ENCODE measurements at regions of chr16 and their contacts with region 1.

Region 1: GRCh38 chr16:49407873-49408550 is 34.4 kb downstream of the C16orf78 start:
- DNase-seq: peak; percentile 24 to 76 (median 64)
- ATAC-seq: peak; percentile 42
- H3K4me3 ChIP-seq: no peak overlapping the region
- H3K4me3 Mint-ChIP-seq: no peak overlapping the region
- H3K27ac ChIP-seq: no peak overlapping the region
- H3K27ac Mint-ChIP-seq: no peak overlapping the region
- H3K4me1 ChIP-seq: no peaks in the 10 kb centered on the region
- H3K4me1 Mint-ChIP-seq: peaks cover 3% of the 10 kb centered on the region
- H3K27me3 ChIP-seq: no peaks in the 10 kb centered on the region
- H3K27me3 Mint-ChIP-seq: peaks cover 17% of the 10 kb centered on the region
- CTCF ChIP-seq: peak; percentile 74

Region 2: DNA sequence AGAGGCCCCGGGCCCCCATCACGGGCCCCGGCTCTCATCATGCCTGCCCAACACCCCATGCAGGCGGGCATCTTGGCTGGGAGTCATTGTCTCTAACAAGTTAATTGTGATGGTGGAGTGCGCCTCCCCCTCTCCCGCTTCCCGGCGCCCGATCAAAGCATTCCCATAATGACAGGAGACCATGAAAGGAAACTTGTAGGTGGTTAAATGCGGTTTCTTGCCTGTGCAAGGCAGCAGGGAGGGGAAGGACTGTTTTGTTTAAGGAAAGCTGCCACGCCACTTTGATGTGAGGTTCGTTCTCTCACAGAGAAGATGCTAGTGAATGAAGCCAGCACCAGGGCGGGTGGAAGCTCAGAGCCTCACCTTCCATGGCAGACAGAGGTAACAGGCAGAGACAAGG is 11.0 kb after region 1 on chr16:
- CTCF ChIA-PET with region 1: interaction called, 12 read pairs
- POLR2A ChIA-PET with region 1: no interaction called
- intact Hi-C with region 1: no loop called
- DNase-seq: no peak
- ATAC-seq: no peak
- H3K4me3 ChIP-seq: no peak overlapping the region
- H3K4me3 Mint-ChIP-seq: no peak overlapping the region
- H3K27ac ChIP-seq: no peak overlapping the region
- H3K27ac Mint-ChIP-seq: no peak overlapping the region
- H3K4me1 ChIP-seq: no peaks in the 10 kb centered on the region
- H3K4me1 Mint-ChIP-seq: peaks cover 3% of the 10 kb centered on the region
- H3K27me3 ChIP-seq: no peaks in the 10 kb centered on the region
- H3K27me3 Mint-ChIP-seq: peaks cover 4% of the 10 kb centered on the region
- CTCF ChIP-seq: no peak

Region 3: DNA sequence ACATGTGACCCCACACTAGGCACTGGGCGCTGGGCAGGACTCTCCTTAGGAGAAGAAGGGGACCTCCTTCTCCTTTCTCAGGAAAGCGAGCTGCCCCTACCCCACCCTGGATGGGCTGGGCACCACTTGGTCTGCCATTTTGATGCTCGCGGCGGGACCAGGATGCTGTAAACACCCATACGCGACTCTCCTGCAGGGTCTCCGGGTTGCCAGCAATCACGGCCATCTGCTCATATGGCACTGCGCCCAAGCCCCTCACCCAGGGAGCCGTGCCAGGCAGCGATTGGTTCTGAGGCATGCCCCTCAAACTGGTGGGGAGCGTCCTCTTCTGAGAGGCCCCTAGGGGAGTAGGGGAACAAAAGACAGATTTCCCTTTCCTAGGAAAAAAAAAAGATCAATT is 64.6 kb after region 1 on chr16:
- CTCF ChIA-PET with region 1: no interaction called
- POLR2A ChIA-PET with region 1: no interaction called
- intact Hi-C with region 1: no loop called
- DNase-seq: peak in 1 of 9 experiments; percentile 41
- ATAC-seq: no peak
- H3K4me3 ChIP-seq: no peak overlapping the region
- H3K4me3 Mint-ChIP-seq: no peak overlapping the region
- H3K27ac ChIP-seq: no peak overlapping the region
- H3K27ac Mint-ChIP-seq: no peak overlapping the region
- H3K4me1 ChIP-seq: no peaks in the 10 kb centered on the region
- H3K4me1 Mint-ChIP-seq: no peaks in the 10 kb centered on the region
- H3K27me3 ChIP-seq: no peaks in the 10 kb centered on the region
- H3K27me3 Mint-ChIP-seq: no peaks in the 10 kb centered on the region
- CTCF ChIP-seq: no peak

Region 4: GRCh38 chr16:49491771-49492761 is 84.1 kb after region 1 on chr16:
- CTCF ChIA-PET with region 1: interaction called, 3 read pairs
- POLR2A ChIA-PET with region 1: no interaction called
- intact Hi-C with region 1: loop called in 1 of 2 experiments (anchors 2 kb)
- DNase-seq: peak in 7 of 9 experiments; percentile 21 to 64 (median 54)
- ATAC-seq: peak; percentile 78
- H3K4me3 ChIP-seq: no peak overlapping the region
- H3K4me3 Mint-ChIP-seq: no peak overlapping the region
- H3K27ac ChIP-seq: no peak overlapping the region
- H3K27ac Mint-ChIP-seq: no peak overlapping the region
- H3K4me1 ChIP-seq: no peaks in the 10 kb centered on the region
- H3K4me1 Mint-ChIP-seq: peaks cover 2% of the 10 kb centered on the region
- H3K27me3 ChIP-seq: no peaks in the 10 kb centered on the region
- H3K27me3 Mint-ChIP-seq: no peaks in the 10 kb centered on the region
- CTCF ChIP-seq: peak; percentile 83

Region 5: GRCh38 chr16:49592546-49593423 is 184.8 kb after region 1 on chr16:
- CTCF ChIA-PET with region 1: interaction called, 58 read pairs
- POLR2A ChIA-PET with region 1: no interaction called
- intact Hi-C with region 1: loop called in 1 of 2 experiments (anchors 1 kb)
- DNase-seq: peak; percentile 5 to 69 (median 42)
- ATAC-seq: peak; percentile 59
- H3K4me3 ChIP-seq: no peak overlapping the region
- H3K4me3 Mint-ChIP-seq: no peak overlapping the region
- H3K27ac ChIP-seq: no peak overlapping the region
- H3K27ac Mint-ChIP-seq: no peak overlapping the region
- H3K4me1 ChIP-seq: no peaks in the 10 kb centered on the region
- H3K4me1 Mint-ChIP-seq: peaks cover 12% of the 10 kb centered on the region
- H3K27me3 ChIP-seq: no peaks in the 10 kb centered on the region
- H3K27me3 Mint-ChIP-seq: peaks cover 7% of the 10 kb centered on the region
- CTCF ChIP-seq: peak; percentile 67

Region 6: GRCh38 chr16:49921791-49922456 is 513.9 kb after region 1 on chr16:
- CTCF ChIA-PET with region 1: interaction called, 26 read pairs
- POLR2A ChIA-PET with region 1: no interaction called
- intact Hi-C with region 1: loop called in 1 of 2 experiments (anchors 1 kb)
- DNase-seq: peak; percentile 5 to 55 (median 32)
- ATAC-seq: no peak
- H3K4me3 ChIP-seq: no peak overlapping the region
- H3K4me3 Mint-ChIP-seq: no peak overlapping the region
- H3K27ac ChIP-seq: no peak overlapping the region
- H3K27ac Mint-ChIP-seq: no peak overlapping the region
- H3K4me1 ChIP-seq: no peaks in the 10 kb centered on the region
- H3K4me1 Mint-ChIP-seq: no peaks in the 10 kb centered on the region
- H3K27me3 ChIP-seq: no peaks in the 10 kb centered on the region
- H3K27me3 Mint-ChIP-seq: peaks cover 14% of the 10 kb centered on the region
- CTCF ChIP-seq: peak; percentile 28

Measured in CD8-positive, alpha-beta T cell (primary cell).